ENCODE measurements at regions of chr18 and their contacts with region 1.

Region 1: GRCh38 chr18:54983041-54983686 is 23.9 kb upstream of the CCDC68 start:
- DNase-seq: no peak
- H3K4me3 Mint-ChIP-seq: no peak overlapping the region
- H3K27ac Mint-ChIP-seq: no peak overlapping the region
- H3K4me1 Mint-ChIP-seq: no peaks in the 10 kb centered on the region
- H3K27me3 Mint-ChIP-seq: peaks cover 3% of the 10 kb centered on the region

Region 2: GRCh38 chr18:54558609-54559585 is 424.3 kb before region 1 on chr18:
- CTCF ChIA-PET with region 1: interaction called, 7 read pairs
- POLR2A ChIA-PET with region 1: no interaction called
- intact Hi-C with region 1: loop called (anchors 1 kb)
- DNase-seq: no peak
- H3K4me3 Mint-ChIP-seq: no peak overlapping the region
- H3K27ac Mint-ChIP-seq: no peak overlapping the region
- H3K4me1 Mint-ChIP-seq: no peaks in the 10 kb centered on the region
- H3K27me3 Mint-ChIP-seq: no peaks in the 10 kb centered on the region

Region 3: DNA sequence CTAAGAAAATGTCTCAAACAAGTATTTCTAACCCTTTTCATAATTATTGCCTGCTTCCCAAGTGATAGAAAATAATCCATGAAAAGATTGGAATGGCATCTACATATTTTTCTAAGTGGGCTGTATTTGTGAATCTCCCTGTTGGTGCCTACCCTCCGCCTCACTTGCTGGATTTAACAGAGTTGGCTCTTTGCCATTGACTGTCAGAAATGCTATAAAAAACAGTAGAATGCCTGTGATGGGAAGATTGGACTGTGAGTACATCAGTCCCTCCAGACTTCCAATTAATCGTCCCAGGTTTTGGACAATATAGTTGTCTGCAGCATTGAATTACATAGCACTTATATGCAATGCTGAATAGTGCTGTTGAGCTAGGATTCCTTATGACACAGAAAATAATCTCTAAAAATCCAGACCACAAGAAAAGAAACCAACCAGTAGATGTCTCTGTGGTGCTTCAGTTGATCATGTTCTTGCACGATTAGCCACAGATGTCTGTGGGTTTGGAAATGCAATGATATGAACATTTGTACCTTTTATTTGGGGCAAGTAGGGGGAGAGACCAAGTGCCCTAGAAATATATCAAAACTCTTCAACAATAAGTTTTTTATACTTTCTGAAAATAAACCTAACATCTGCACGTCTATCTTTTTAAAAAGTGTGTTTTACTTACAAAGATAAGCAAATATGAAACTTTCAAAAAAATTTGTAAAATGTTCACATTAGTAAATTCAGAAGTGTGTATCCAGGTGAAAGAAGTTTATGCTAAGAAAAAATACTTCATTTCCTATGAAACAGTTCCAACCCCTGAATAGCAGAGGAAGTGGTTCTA is 303.6 kb before region 1 on chr18:
- CTCF ChIA-PET with region 1: interaction called, 40 read pairs
- POLR2A ChIA-PET with region 1: no interaction called
- intact Hi-C with region 1: loop called (anchors 1 kb)
- DNase-seq: no peak
- H3K4me3 Mint-ChIP-seq: no peak overlapping the region
- H3K27ac Mint-ChIP-seq: no peak overlapping the region
- H3K4me1 Mint-ChIP-seq: peaks cover 3% of the 10 kb centered on the region
- H3K27me3 Mint-ChIP-seq: peaks cover 1% of the 10 kb centered on the region

Region 4: GRCh38 chr18:54717673-54718407 is 265.3 kb before region 1 on chr18:
- CTCF ChIA-PET with region 1: interaction called, 4 read pairs
- POLR2A ChIA-PET with region 1: no interaction called
- intact Hi-C with region 1: loop called (anchors 2 kb)
- DNase-seq: peak; percentile 62
- H3K4me3 Mint-ChIP-seq: peak overlapping the region; percentile 61
- H3K27ac Mint-ChIP-seq: peak overlapping the region; percentile 23
- H3K4me1 Mint-ChIP-seq: peaks cover 32% of the 10 kb centered on the region
- H3K27me3 Mint-ChIP-seq: peaks cover 5% of the 10 kb centered on the region

Region 5: DNA sequence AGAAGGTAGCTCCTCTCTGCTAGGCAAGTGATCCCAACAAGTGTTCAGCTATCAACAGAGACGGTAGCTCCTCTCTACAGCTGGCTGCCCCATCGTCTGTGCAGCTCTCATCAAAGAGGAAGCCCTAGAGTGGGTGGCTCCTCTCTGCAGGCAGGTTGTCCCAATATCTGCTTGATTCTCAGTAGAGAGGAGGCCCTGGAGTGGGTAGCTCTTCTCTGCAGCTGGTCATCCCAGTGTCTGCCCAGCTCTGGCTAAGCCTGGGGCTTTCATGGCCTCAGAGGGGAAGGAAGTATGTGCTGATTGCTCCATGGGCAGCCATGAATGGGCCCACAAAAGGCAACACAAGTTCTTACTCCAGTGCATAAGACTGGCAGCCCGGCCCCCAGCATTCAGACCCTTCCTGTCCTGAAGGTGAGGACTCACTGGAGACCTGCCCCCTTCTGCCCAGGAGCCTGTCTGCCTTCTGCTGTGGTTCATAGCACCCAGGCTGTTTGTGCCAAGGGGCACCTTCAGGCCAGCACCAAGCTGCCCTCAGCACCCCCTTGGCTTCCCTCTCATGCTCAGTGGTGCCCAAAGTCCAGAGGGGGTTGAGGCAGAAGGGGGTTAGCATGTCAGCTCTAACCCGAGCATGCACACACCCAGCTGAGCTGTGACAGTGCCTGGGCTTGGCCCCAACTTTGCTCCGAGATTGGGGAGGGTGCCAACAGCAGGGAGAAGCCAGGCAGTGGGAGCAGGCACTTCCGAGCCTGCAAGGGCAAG is 72.8 kb before region 1 on chr18:
- CTCF ChIA-PET with region 1: no interaction called
- POLR2A ChIA-PET with region 1: no interaction called
- intact Hi-C with region 1: no loop called
- DNase-seq: no peak
- H3K4me3 Mint-ChIP-seq: no peak overlapping the region
- H3K27ac Mint-ChIP-seq: no peak overlapping the region
- H3K4me1 Mint-ChIP-seq: no peaks in the 10 kb centered on the region
- H3K27me3 Mint-ChIP-seq: peaks cover 2% of the 10 kb centered on the region

Region 6: DNA sequence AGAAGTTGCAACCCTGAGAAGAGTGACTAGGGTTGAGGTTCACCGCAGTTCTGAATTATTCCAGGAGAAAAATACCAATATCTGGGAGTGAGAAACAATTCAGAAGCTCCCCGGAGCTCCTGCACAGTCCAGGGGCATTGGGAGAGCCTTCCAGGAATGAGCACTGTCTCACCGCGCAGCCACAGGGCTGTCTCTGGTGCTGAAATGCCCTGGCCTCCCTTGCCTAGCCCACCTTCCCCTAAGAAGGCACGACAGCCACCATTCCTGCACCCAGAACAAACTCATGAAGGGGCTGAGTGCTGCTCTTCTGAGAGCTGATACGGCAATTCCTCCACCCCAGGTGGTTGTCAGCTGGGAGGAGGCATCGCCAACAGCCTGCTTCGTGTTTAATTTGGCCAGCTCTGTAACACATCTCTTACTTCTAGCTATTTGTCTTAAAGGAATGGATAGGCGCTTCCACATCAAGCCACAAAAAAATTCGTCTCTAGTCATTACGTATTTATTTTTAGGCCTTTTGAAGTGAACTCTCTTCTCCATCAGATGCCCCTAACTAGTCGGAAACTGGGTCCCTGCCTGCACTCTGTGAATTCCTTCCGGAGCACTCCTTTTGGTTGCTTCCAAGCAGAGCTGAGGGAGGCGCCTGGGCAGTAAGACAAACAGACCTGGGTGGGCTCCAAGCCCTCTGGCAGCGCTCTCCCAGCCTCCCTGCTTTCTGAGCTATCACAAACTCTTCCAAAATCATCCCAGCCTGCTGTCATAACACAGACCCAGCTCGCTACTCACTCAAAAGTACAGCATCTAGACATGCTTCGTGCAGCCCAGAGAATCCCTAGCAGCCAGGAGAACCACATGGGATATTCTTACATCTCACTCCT is 96.6 kb after region 1 on chr18:
- CTCF ChIA-PET with region 1: no interaction called
- POLR2A ChIA-PET with region 1: no interaction called
- intact Hi-C with region 1: no loop called
- DNase-seq: no peak
- H3K4me3 Mint-ChIP-seq: no peak overlapping the region
- H3K27ac Mint-ChIP-seq: no peak overlapping the region
- H3K4me1 Mint-ChIP-seq: no peaks in the 10 kb centered on the region
- H3K27me3 Mint-ChIP-seq: peaks cover 4% of the 10 kb centered on the region